CD4-positive, alpha-beta T cell (primary cell): ENCODE measurements at regions of chr17 and their contacts with region 1.

Region 1: DNA sequence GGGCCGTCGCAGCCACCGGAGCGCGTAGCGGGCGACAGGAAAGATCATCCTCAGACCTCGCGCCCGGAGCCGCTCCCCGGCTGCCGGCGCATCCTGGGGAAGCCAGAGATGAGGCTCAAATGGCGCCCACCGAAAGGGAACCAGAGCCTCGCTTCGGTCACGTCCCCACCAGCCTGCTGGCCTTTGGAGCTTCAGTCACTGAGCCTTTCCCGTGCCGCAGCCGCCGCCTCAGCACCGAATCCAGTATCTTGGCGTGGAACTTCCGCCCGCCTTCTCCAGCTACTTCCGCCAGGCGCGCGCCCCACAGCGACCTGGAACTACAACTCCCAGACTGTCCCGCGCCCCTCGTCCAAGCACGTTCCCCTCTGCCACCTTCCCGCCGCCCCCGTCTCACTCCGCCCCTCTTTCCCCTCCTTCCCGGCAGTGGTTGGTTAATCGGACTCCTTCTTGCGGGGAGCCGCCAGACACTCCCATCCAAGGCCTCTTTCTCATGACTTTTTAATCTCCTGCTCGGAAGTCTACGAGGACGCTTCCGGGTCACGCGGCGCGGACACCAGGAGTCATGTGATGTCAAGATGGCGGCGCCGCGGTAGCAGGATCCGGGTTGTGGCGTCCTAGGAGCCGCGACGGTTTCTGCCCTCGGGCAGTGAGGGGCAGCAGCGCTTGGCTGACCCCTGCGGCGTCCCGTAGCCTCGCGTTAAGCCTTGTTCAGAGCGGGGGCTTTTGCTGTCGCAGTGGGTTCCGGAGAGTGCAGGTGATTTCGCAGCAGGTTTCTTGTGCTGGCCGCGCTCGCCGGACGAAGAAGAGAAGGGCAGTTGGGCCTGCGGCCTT is at the starts of genes SMCR8 and TOP3A:
- DNase-seq: peak; percentile 94 to 99 (median 97)
- ATAC-seq: peak; percentile 95
- H3K4me3 ChIP-seq: peak within 1 kb of the TSS; percentile 86
- H3K4me3 Mint-ChIP-seq: peak within 1 kb of the TSS; percentile 93
- H3K27ac ChIP-seq: peak within 1 kb of the TSS; percentile 96 to 98
- H3K27ac Mint-ChIP-seq: peak within 1 kb of the TSS; percentile 84
- H3K4me1 ChIP-seq: peaks cover 74% of the 10 kb centered on the region
- H3K4me1 Mint-ChIP-seq: peaks cover 85% of the 10 kb centered on the region
- H3K27me3 ChIP-seq: no peaks in the 10 kb centered on the region
- H3K27me3 Mint-ChIP-seq: no peaks in the 10 kb centered on the region
- CTCF ChIP-seq: no peak
- total RNA-seq, gene SMCR8: 52.2 to 54.5 TPM
- total RNA-seq, gene TOP3A: 21.5 to 24.8 TPM

Region 2: GRCh38 chr17:17476865-17477467 is 838.0 kb before region 1 on chr17 and contains the start of gene MED9:
- CTCF ChIA-PET with region 1: no interaction called
- POLR2A ChIA-PET with region 1: no interaction called
- intact Hi-C with region 1: loop called in 1 of 2 experiments (anchors 5 kb)
- DNase-seq: peak; percentile 92 to 98 (median 94)
- ATAC-seq: peak; percentile 98
- H3K4me3 ChIP-seq: peak within 1 kb of the TSS; percentile 82
- H3K4me3 Mint-ChIP-seq: peak within 1 kb of the TSS; percentile 91
- H3K27ac ChIP-seq: peak within 1 kb of the TSS; percentile 42 to 58
- H3K27ac Mint-ChIP-seq: peak within 1 kb of the TSS; percentile 87
- H3K4me1 ChIP-seq: peaks cover 42% of the 10 kb centered on the region
- H3K4me1 Mint-ChIP-seq: peaks cover 51% of the 10 kb centered on the region
- H3K27me3 ChIP-seq: peaks cover 0 to 2% of the 10 kb centered on the region in 2 experiments
- H3K27me3 Mint-ChIP-seq: peaks cover 6% of the 10 kb centered on the region
- CTCF ChIP-seq: no peak
- total RNA-seq, gene MED9: 27.0 to 27.9 TPM

Region 3: DNA sequence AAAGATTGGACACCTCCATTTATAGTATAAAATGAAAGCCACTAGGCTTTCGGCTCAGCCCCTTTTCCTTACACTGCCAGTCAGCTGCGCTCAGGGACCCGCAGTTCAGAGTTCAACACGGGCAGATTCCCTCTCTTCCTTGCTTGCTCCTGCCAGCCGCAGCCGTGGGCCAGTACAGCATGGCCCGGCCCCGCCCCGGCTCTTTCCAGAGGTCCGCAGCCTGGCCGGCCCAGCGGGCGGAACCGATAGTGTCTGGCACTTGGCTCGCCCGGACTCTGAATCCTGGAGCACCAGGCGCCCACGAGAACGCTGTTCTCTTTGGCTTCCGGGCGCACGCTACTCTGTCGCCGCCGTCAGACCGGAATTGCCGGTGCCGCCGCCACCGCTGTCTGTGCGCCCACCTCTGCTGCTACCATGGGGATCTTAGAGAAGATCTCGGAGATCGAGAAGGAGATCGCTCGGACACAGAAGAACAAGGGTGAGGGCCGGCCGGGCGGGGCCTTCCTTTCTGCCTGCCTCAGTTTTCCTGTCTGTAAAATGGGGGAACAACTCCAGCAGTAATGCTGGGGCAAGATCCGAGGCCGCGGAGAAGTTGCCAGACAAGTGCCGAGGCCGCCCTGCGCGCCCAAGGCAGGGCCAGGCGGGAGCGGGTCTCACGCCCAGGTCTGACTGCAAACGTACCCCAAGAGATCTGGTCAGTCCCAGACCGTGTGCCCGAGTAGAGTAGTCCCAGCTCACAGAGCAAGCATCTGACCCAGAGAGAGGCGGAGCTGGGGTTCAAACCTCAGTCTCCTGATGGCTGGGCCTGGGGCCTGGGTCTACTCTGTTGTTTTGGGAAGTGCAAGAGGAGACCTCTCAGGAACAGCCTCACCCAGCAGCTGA is 227.1 kb before region 1 on chr17 and contains the start of gene DRG2:
- CTCF ChIA-PET with region 1: no interaction called
- POLR2A ChIA-PET with region 1: interaction called, 3 read pairs
- intact Hi-C with region 1: loop called in 1 of 2 experiments (anchors 2 kb)
- DNase-seq: peak; percentile 79 to 94 (median 84)
- ATAC-seq: peak; percentile 92
- H3K4me3 ChIP-seq: peak within 1 kb of the TSS; percentile 79
- H3K4me3 Mint-ChIP-seq: peak within 1 kb of the TSS; percentile 100
- H3K27ac ChIP-seq: peak within 1 kb of the TSS; percentile 80
- H3K27ac Mint-ChIP-seq: peak within 1 kb of the TSS; percentile 97
- H3K4me1 ChIP-seq: peaks cover 27% of the 10 kb centered on the region
- H3K4me1 Mint-ChIP-seq: peaks cover 32% of the 10 kb centered on the region
- H3K27me3 ChIP-seq: no peaks in the 10 kb centered on the region
- H3K27me3 Mint-ChIP-seq: no peaks in the 10 kb centered on the region
- CTCF ChIP-seq: no peak
- total RNA-seq, gene DRG2: 38.9 to 40.6 TPM

Region 4: GRCh38 chr17:18225121-18225566 is 89.8 kb before region 1 on chr17:
- CTCF ChIA-PET with region 1: no interaction called
- POLR2A ChIA-PET with region 1: interaction called, 3 read pairs
- intact Hi-C with region 1: loop called in 1 of 2 experiments (anchors 1 kb)
- DNase-seq: peak; percentile 90 to 97 (median 97)
- ATAC-seq: peak; percentile 98
- H3K4me3 ChIP-seq: peak overlapping the region; percentile 29
- H3K4me3 Mint-ChIP-seq: peak overlapping the region; percentile 84
- H3K27ac ChIP-seq: no peak overlapping the region
- H3K27ac Mint-ChIP-seq: peak overlapping the region; percentile 62
- H3K4me1 ChIP-seq: peaks cover 42% of the 10 kb centered on the region
- H3K4me1 Mint-ChIP-seq: peaks cover 25% of the 10 kb centered on the region
- H3K27me3 ChIP-seq: no peaks in the 10 kb centered on the region
- H3K27me3 Mint-ChIP-seq: no peaks in the 10 kb centered on the region
- CTCF ChIP-seq: no peak

Region 5: DNA sequence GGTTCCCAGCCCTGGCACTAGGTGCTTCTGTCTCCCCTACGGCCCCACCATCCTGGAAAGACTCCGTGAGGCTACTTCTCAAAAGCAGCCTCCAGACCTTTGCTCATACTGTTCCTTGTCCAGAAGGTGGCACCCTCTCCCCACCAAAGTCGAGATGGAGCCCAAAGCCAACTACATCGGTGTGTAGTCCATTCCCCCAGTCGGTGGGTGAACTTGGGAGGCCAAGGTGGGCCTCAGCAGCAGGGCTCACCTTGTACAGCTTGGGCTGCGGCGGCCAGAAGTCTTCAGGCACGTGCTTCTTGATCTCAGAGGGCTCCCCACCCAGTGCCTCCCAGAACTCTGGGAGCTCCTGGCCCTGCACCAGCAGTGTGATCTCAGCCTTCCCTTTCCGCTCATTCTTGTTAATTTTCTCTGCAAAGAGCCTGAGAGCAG is 66.6 kb before region 1 on chr17:
- CTCF ChIA-PET with region 1: no interaction called
- POLR2A ChIA-PET with region 1: interaction called, 3 read pairs
- intact Hi-C with region 1: loop called in 1 of 2 experiments (anchors 5 kb)
- DNase-seq: peak; percentile 44 to 81 (median 60)
- ATAC-seq: peak; percentile 82
- H3K4me3 ChIP-seq: no peak overlapping the region
- H3K4me3 Mint-ChIP-seq: no peak overlapping the region
- H3K27ac ChIP-seq: no peak overlapping the region
- H3K27ac Mint-ChIP-seq: peak overlapping the region; percentile 25
- H3K4me1 ChIP-seq: no peaks in the 10 kb centered on the region
- H3K4me1 Mint-ChIP-seq: peaks cover 5% of the 10 kb centered on the region
- H3K27me3 ChIP-seq: no peaks in the 10 kb centered on the region
- H3K27me3 Mint-ChIP-seq: no peaks in the 10 kb centered on the region
- CTCF ChIP-seq: peak; percentile 69

Region 6: DNA sequence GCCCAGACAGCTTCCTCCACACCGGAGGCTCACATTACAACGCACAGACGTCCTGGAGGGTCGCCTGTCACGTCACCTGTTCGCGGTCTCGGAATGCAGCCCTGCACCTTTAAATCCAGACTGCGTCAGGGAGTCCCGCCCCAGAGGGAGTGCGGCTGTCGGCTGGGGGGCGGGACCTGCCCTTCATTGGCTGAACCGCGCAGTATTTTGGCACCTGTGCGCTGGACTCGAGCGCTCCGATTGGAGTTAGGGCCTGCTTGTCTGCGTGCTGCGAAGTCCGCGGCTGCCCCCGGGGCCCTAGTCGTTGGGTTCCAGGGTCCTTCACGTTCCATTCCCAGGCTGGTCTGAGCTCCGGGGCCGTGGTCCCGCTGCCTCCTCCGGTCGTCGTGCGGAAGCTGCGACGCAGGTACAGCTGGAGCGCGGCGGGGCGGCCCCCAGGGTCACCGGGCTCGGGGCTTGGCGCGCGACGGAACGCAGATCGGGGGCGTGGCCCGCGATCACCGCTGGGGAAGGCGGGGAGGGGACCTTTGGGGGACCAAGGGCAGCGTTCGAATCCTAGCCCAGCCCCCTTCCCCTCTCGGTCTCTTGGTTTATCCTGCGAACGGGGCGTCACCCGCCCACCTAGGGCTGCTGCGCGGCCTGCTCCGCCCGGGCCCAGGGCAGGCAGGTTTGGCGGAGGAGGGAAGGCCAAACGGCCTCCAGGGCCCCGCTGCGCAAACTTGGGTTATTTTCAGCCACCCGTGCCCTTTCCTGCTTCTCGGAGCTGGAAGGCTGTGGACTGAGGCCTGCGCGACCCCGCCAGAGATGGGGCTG is 54.4 kb before region 1 on chr17 and contains the start of gene MIEF2:
- CTCF ChIA-PET with region 1: no interaction called
- POLR2A ChIA-PET with region 1: interaction called, 14 read pairs
- intact Hi-C with region 1: loop called (anchors 1 kb)
- DNase-seq: peak; percentile 83 to 95 (median 90)
- ATAC-seq: peak; percentile 91
- H3K4me3 ChIP-seq: peak within 1 kb of the TSS; percentile 78
- H3K4me3 Mint-ChIP-seq: peak within 1 kb of the TSS; percentile 93
- H3K27ac ChIP-seq: peak within 1 kb of the TSS; percentile 82 to 85
- H3K27ac Mint-ChIP-seq: peak within 1 kb of the TSS; percentile 90
- H3K4me1 ChIP-seq: peaks cover 65% of the 10 kb centered on the region
- H3K4me1 Mint-ChIP-seq: peaks cover 48% of the 10 kb centered on the region
- H3K27me3 ChIP-seq: no peaks in the 10 kb centered on the region
- H3K27me3 Mint-ChIP-seq: no peaks in the 10 kb centered on the region
- CTCF ChIP-seq: no peak
- total RNA-seq, gene MIEF2: 10.7 to 14.3 TPM

Region 7: GRCh38 chr17:18363101-18364049 is 48.4 kb after region 1 on chr17 and contains the start of gene SHMT1:
- CTCF ChIA-PET with region 1: interaction called, 3 read pairs
- POLR2A ChIA-PET with region 1: interaction called, 8 read pairs
- intact Hi-C with region 1: loop called in 1 of 2 experiments (anchors 1 kb)
- DNase-seq: peak; percentile 77 to 95 (median 88)
- ATAC-seq: peak; percentile 100
- H3K4me3 ChIP-seq: peak within 1 kb of the TSS; percentile 69
- H3K4me3 Mint-ChIP-seq: peak within 1 kb of the TSS; percentile 97
- H3K27ac ChIP-seq: peak within 1 kb of the TSS in 1 of 2 donors; percentile 23
- H3K27ac Mint-ChIP-seq: peak within 1 kb of the TSS; percentile 79
- H3K4me1 ChIP-seq: peaks cover 16% of the 10 kb centered on the region
- H3K4me1 Mint-ChIP-seq: peaks cover 18% of the 10 kb centered on the region
- H3K27me3 ChIP-seq: no peaks in the 10 kb centered on the region
- H3K27me3 Mint-ChIP-seq: no peaks in the 10 kb centered on the region
- CTCF ChIP-seq: no peak
- total RNA-seq, gene SHMT1: 5.6 to 7.1 TPM